Activated CD4-positive, alpha-beta T cell treated with anti-CD3 and anti-CD28 coated beads, Interleukin-2, amount 10 ng/mL, durations not matched to agents 7 days and 5 days (primary cell): ENCODE measurements at regions of chr10 and their contacts with region 1.

Region 1: GRCh38 chr10:45453639-45454255 is 79.7 kb downstream of the ALOX5 start:
- DNase-seq: no peak
- H3K4me3 Mint-ChIP-seq: no peak overlapping the region
- H3K27ac Mint-ChIP-seq: peak overlapping the region; percentile 87
- H3K4me1 Mint-ChIP-seq: peaks cover 35% of the 10 kb centered on the region
- H3K27me3 Mint-ChIP-seq: no peaks in the 10 kb centered on the region

Region 2: DNA sequence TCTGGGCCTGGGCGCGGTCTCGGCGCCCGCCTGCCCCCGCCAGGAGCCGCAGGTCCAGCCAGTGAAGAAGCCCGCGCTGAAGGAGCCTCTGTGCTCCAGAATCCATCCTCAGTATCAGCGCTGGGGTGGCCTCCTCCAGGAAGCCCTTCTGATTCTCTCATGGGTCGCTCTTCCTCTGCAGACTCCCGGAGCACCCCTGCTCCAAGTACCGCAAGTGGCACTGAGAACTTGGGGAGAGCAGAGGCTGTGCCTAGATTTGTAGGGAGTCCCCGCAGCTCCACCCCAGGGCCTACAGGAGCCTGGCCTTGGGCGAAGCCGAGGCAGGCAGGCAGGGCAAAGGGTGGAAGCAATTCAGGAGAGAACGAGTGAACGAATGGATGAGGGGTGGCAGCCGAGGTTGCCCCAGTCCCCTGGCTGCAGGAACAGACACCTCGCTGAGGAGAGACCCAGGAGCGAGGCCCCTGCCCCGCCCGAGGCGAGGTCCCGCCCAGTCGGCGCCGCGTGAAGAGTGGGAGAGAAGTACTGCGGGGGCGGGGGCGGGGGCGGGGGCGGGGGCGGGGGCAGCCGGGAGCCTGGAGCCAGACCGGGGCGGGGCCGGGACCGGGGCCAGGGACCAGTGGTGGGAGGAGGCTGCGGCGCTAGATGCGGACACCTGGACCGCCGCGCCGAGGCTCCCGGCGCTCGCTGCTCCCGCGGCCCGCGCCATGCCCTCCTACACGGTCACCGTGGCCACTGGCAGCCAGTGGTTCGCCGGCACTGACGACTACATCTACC is 80.0 kb before region 1 on chr10 and contains the start of gene ALOX5:
- CTCF ChIA-PET with region 1: no interaction called
- POLR2A ChIA-PET with region 1: no interaction called
- DNase-seq: peak; percentile 48
- H3K4me3 Mint-ChIP-seq: peak within 1 kb of the TSS; percentile 72
- H3K27ac Mint-ChIP-seq: peak within 1 kb of the TSS; percentile 73
- H3K4me1 Mint-ChIP-seq: peaks cover 29% of the 10 kb centered on the region
- H3K27me3 Mint-ChIP-seq: peaks cover 73% of the 10 kb centered on the region
- total RNA-seq, gene ALOX5: 6.7 to 9.0 TPM

Region 3: GRCh38 chr10:45464958-45465567 is 11.3 kb after region 1 on chr10:
- CTCF ChIA-PET with region 1: interaction called, 10 read pairs
- POLR2A ChIA-PET with region 1: no interaction called
- DNase-seq: peak; percentile 82
- H3K4me3 Mint-ChIP-seq: no peak overlapping the region
- H3K27ac Mint-ChIP-seq: peak overlapping the region; percentile 39
- H3K4me1 Mint-ChIP-seq: peaks cover 52% of the 10 kb centered on the region
- H3K27me3 Mint-ChIP-seq: no peaks in the 10 kb centered on the region